Heart right ventricle (tissue), 16 donors: ENCODE measurements at regions of chrX and their contacts with region 1.

Region 1: GRCh38 chrX:15416133-15416993 is 32.1 kb upstream of the VEGFD start:
- DNase-seq: no peak
- ATAC-seq: no peak
- H3K4me3 ChIP-seq: no peak overlapping the region
- H3K27ac ChIP-seq: no peak overlapping the region
- H3K4me1 ChIP-seq: no peaks in the 10 kb centered on the region
- H3K27me3 ChIP-seq: peaks cover 0 to 30% (median 0%) of the 10 kb centered on the region in 7 donors
- CTCF ChIP-seq: no peak

Region 2: DNA sequence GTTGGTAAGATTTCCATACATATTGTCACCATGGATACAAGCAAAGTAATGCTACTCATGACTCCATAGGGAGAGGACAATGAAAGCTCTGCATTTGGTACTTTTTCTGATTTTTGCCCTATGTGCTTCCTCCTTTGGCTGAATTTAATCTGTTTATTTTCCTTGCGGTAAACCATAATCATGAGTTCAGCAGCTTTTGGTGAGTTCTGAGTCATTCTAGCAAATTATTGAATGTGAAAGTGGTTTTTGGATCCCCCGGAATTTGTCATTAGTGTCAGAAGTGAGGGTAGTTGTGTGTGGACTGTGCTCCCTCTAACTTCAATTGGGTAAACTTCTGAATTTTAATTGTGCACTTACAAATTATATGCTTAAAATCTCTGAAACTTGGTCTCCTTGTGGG is 372.8 kb before region 1 on chrX:
- intact Hi-C with region 1: no loop called
- DNase-seq: no peak
- ATAC-seq: no peak
- H3K4me3 ChIP-seq: no peak overlapping the region
- H3K27ac ChIP-seq: no peak overlapping the region
- H3K4me1 ChIP-seq: no peaks in the 10 kb centered on the region
- H3K27me3 ChIP-seq: no peaks in the 10 kb centered on the region
- CTCF ChIP-seq: no peak

Region 3: GRCh38 chrX:15356444-15356843 is 59.9 kb before region 1 on chrX:
- intact Hi-C with region 1: loop called in 1 of 10 experiments (anchors 10 kb)
- DNase-seq: no peak
- ATAC-seq: peak in 4 of 8 donors; percentile 33 to 55 (median 50)
- H3K4me3 ChIP-seq: no peak overlapping the region
- H3K27ac ChIP-seq: no peak overlapping the region
- H3K4me1 ChIP-seq: peaks cover 0 to 6% (median 0%) of the 10 kb centered on the region in 9 donors
- H3K27me3 ChIP-seq: peaks cover 0 to 26% (median 0%) of the 10 kb centered on the region in 7 donors
- CTCF ChIP-seq: no peak

Region 4: GRCh38 chrX:15384304-15384703 is 32.1 kb before region 1 on chrX and contains the start of gene VEGFD:
- intact Hi-C with region 1: no loop called
- DNase-seq: no peak
- ATAC-seq: peak in 1 of 8 donors; percentile 51
- H3K4me3 ChIP-seq: peak within 1 kb of the TSS in 2 of 10 donors; percentile 18 to 20
- H3K27ac ChIP-seq: no peak within 1 kb of the TSS
- H3K4me1 ChIP-seq: no peaks in the 10 kb centered on the region
- H3K27me3 ChIP-seq: peaks cover 0 to 57% (median 0%) of the 10 kb centered on the region in 7 donors
- CTCF ChIP-seq: no peak
- total RNA-seq, gene VEGFD: 1.4 to 21.0 (median 4.4) TPM